Right ventricle myocardium superior (tissue), 1 donor: ENCODE measurements at regions of chr1 and their contacts with region 1.

Region 1: GRCh38 chr1:10430216-10431069 is at the start of gene CENPS:
- DNase-seq: peak; percentile 95
- ATAC-seq: peak; percentile 98
- total RNA-seq, gene CENPS: 8.7 TPM

Region 2: DNA sequence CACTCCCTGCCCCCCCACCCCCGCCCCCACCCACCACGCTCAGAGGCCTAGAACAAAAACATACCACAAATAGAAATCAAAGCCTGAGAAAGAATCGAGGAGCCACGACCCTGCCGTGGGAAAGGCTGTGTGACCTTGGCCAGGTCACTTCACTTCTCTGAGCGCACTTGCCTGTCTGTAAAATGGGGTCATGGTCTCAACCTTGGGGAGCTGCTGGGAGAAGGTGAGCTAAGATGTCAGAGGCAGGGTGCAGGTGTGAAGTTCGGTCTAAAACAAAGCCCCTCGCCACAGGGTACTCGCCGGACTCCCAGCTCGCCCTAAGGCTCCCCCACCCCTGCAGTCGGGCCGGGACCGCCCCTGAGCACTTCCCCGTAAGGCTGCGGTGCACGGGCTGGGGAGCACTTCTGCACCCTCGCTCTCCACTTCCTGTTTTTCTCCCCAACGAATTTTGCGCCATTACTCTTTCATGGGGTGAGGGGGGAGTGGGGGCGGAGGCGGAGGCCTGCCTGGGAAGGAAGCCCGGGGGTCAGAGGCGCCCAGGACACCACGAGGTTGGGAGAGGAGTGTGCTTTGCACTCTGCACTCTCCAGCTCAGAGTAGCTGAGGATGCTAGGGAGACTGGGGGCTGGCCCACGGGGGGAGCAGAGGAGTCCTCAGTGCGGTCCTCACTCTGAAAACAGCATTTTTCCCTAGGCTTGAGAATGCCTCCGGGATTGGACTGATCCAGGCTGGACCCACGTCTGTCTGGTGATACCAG is 800.8 kb before region 1 on chr1:
- intact Hi-C with region 1: loop called (anchors 2 kb)
- DNase-seq: peak; percentile 81
- ATAC-seq: peak; percentile 59

Region 3: GRCh38 chr1:10378081-10378841 is 52.2 kb before region 1 on chr1:
- intact Hi-C with region 1: loop called (anchors 2 kb)
- DNase-seq: peak; percentile 68
- ATAC-seq: peak; percentile 40

Region 4: GRCh38 chr1:10494754-10495474 is 64.5 kb after region 1 on chr1:
- intact Hi-C with region 1: loop called (anchors 10 kb)
- DNase-seq: peak; percentile 81
- ATAC-seq: peak; percentile 91